CD8-positive, alpha-beta T cell (primary cell): ENCODE measurements at regions of chr12 and their contacts with region 1.

Region 1: DNA sequence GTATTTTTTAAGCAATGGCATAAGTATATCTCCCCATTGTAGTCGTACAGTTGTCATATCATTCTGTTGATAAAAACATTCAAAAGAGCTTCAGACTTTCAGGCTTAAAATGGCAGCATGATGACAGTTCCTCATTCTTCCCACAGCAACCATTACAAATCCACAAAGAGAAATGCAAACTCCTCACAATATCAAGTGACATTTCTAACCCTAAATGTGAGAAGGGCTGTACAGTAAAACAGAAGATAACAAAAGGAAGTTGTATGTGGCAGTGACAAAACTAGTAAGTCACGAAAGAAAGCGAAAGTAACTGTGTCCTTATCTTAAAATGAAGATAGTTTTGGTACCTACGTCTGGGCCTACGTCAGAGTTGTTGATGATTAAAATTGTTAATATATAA is 46.7 kb downstream of the GXYLT1 start:
- DNase-seq: peak in 2 of 9 experiments; percentile 69 to 86
- ATAC-seq: peak; percentile 86
- H3K4me3 ChIP-seq: peak overlapping the region; percentile 39 to 53
- H3K4me3 Mint-ChIP-seq: peak overlapping the region; percentile 92
- H3K27ac ChIP-seq: peak overlapping the region; percentile 89
- H3K27ac Mint-ChIP-seq: peak overlapping the region; percentile 99
- H3K4me1 ChIP-seq: peaks cover 35% of the 10 kb centered on the region
- H3K4me1 Mint-ChIP-seq: peaks cover 50% of the 10 kb centered on the region
- H3K27me3 ChIP-seq: no peaks in the 10 kb centered on the region
- H3K27me3 Mint-ChIP-seq: no peaks in the 10 kb centered on the region
- CTCF ChIP-seq: no peak

Region 2: GRCh38 chr12:40144023-40144422 is 1953.9 kb before region 1 on chr12:
- CTCF ChIA-PET with region 1: no interaction called
- POLR2A ChIA-PET with region 1: no interaction called
- intact Hi-C with region 1: loop called in 1 of 2 experiments (anchors 5 kb)
- DNase-seq: peak in 1 of 9 experiments; percentile 16
- ATAC-seq: peak; percentile 48
- H3K4me3 ChIP-seq: no peak overlapping the region
- H3K4me3 Mint-ChIP-seq: no peak overlapping the region
- H3K27ac ChIP-seq: no peak overlapping the region
- H3K27ac Mint-ChIP-seq: no peak overlapping the region
- H3K4me1 ChIP-seq: no peaks in the 10 kb centered on the region
- H3K4me1 Mint-ChIP-seq: no peaks in the 10 kb centered on the region
- H3K27me3 ChIP-seq: no peaks in the 10 kb centered on the region
- H3K27me3 Mint-ChIP-seq: peaks cover 4% of the 10 kb centered on the region
- CTCF ChIP-seq: no peak

Region 3: DNA sequence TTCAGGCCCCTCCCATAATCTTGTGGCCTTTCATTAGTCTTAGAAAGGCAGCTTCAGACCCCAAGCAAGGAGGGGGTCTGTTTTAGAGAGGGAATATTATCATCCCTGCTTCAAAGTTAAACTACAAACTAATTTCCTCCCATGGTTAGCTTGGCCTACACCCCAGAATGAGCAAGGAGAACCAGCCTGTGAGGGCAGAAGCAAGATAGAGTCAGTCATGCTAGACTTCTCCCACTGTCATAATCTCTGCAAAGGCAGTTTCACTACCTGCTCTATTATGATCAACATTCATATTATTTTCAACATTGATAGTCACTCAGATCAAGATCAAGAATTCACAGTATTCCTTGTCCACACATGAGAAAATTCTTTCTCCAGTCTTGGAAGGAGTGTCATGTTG is 58.4 kb before region 1 on chr12:
- CTCF ChIA-PET with region 1: no interaction called
- POLR2A ChIA-PET with region 1: no interaction called
- intact Hi-C with region 1: no loop called
- DNase-seq: no peak
- ATAC-seq: no peak
- H3K4me3 ChIP-seq: no peak overlapping the region
- H3K4me3 Mint-ChIP-seq: no peak overlapping the region
- H3K27ac ChIP-seq: no peak overlapping the region
- H3K27ac Mint-ChIP-seq: no peak overlapping the region
- H3K4me1 ChIP-seq: no peaks in the 10 kb centered on the region
- H3K4me1 Mint-ChIP-seq: no peaks in the 10 kb centered on the region
- H3K27me3 ChIP-seq: no peaks in the 10 kb centered on the region
- H3K27me3 Mint-ChIP-seq: peaks cover 8% of the 10 kb centered on the region
- CTCF ChIP-seq: no peak

Region 4: GRCh38 chr12:42325653-42326474 is 227.9 kb after region 1 on chr12 and contains the starts of genes PPHLN1 and ZCRB1:
- CTCF ChIA-PET with region 1: no interaction called
- POLR2A ChIA-PET with region 1: interaction called, 3 read pairs
- intact Hi-C with region 1: loop called (anchors 1 to 5 kb)
- DNase-seq: peak; percentile 54 to 89 (median 78)
- ATAC-seq: peak; percentile 89
- H3K4me3 ChIP-seq: peak within 1 kb of the TSS; percentile 68 to 95
- H3K4me3 Mint-ChIP-seq: peak within 1 kb of the TSS; percentile 98
- H3K27ac ChIP-seq: peak within 1 kb of the TSS; percentile 79 to 91
- H3K27ac Mint-ChIP-seq: peak within 1 kb of the TSS; percentile 98
- H3K4me1 ChIP-seq: peaks cover 24% of the 10 kb centered on the region
- H3K4me1 Mint-ChIP-seq: peaks cover 54% of the 10 kb centered on the region
- H3K27me3 ChIP-seq: no peaks in the 10 kb centered on the region
- H3K27me3 Mint-ChIP-seq: no peaks in the 10 kb centered on the region
- CTCF ChIP-seq: no peak
- total RNA-seq, gene PPHLN1: 104 to 108 TPM
- total RNA-seq, gene ZCRB1: 35.7 to 39.4 TPM